Sciatic nerve (tissue), 2 donors: ENCODE measurements at regions of chr2 and their contacts with region 1.

Region 1: DNA sequence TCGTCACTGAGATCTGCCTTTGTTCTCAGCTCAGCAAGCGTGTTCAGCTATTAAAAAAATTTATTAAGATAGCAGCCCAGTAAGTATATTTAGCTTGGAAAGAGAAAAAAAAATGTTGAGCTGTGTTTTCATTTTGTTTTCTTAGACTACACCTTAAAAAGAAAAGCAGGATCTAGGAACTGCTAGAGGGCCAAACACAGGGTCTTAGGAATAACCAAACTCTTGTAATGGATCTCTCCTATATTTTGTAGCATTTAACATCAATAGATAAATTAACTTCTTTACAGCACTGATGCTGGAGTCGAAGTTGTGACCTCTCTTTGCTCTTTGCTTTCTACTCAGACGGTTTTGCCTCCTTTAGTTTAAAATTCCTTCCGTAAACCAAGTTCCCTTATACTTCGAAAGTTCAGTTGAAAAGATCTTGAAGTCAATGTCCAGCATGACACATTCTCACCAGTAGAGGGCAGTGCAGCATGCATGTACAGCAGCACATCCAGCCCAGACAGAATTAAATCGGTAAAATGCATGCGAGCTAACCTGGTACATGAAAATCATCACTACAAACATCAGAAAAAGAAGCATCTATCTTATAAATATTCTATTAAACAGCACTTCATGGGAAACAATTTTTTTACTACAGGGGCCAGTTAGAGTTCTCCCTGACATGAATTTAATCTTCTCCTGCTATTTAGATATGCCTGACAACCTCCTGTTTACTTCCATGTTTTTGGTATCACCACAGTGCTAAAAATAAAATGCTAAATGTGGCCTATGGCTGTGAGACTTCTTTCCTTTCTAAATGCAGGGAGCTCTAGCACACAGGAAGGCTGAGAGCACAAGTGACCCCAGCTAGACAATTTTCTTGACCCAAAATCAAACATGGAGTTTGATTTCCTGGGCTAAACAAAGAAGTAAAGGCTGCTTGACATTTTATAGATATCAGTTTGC is 48.2 kb upstream of the MAP3K20 start:
- DNase-seq: peak; percentile 94
- ATAC-seq: peak; percentile 91

Region 2: GRCh38 chr2:172845028-172845630 is 182.3 kb before region 1 on chr2:
- intact Hi-C with region 1: no loop called
- DNase-seq: no peak
- ATAC-seq: no peak

Region 3: GRCh38 chr2:173210270-173211196 is 183.1 kb after region 1 on chr2:
- intact Hi-C with region 1: loop called (anchors 5 kb)
- DNase-seq: peak; percentile 66
- ATAC-seq: peak; percentile 96